ENCODE measurements at regions of chr9 and their contacts with region 1.

Region 1: GRCh38 chr9:74556685-74557084 is 59.5 kb downstream of the RORB start:
- DNase-seq: no peak
- ATAC-seq: no peak

Region 2: DNA sequence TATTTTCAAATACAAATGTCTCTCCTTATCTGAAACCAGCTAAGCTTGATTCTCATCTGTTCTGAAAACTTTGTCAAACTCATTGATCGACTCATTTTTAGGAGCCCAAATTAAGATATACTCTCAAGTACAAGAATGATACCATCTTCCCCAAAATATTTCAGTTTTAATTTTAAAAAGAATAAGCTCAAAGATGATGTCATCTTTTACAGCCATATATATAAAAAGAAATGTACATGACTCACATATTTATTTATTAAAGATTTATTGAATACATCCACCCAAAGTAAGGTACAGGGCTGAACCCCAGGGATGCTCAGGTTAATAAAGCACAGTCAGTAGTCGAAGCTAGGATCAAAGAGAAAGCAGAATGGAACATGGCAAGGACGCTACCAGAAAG is 51.5 kb before region 1 on chr9:
- intact Hi-C with region 1: loop called (anchors 5 kb)
- DNase-seq: no peak
- ATAC-seq: no peak

Region 3: GRCh38 chr9:74645007-74645639 is 88.4 kb after region 1 on chr9:
- intact Hi-C with region 1: no loop called
- DNase-seq: no peak
- ATAC-seq: no peak

Measured in Right ventricle myocardium inferior (tissue), 1 donor.